ENCODE measurements at regions of chr22 and their contacts with region 1.

Region 1: DNA sequence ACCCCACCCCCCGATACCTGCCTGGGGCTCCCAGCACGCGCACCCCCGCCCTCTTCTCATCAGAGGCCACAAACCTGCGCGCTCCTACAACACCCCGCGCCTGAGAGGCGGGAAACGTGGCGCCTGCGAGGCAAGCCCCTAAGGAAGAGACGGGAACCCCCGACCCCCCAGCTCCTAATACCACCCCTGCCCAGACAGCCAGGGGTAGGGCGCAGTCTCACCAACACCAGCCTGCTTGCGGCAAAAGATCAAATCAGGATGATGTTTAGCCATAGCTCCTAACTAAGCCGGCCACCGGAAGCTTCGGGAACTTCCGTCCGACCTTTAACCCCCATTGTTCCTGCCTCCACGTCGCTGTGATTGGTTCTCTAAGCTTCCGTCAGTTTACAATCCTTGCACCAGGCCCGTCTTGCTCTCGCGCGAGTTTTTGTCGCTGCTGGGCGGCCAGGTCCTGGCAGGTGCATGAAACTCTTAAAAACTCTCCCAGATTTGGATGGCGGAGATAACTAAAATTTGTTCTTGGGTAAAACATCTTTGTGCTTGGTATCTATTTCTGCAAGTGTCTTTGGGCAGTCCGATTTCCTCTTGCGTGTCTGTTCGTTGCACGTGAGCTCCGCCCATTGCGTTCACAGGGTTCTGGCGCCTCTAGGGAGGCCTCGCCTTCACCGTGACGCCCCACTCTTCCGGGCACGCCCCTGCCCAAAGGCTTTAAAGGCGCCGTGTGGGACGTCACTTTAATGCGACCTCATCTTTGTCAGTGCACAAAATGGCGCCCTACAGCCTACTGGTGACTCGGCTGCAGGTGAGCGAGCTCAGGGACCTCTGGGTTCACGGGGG is at the starts of genes ACO2 and PHF5A:
- DNase-seq: peak; percentile 97 to 98 (median 97)
- H3K4me3 ChIP-seq: peak within 1 kb of the TSS; percentile 70 to 93 (median 93)
- H3K4me3 Mint-ChIP-seq: peak within 1 kb of the TSS; percentile 88 to 96
- H3K27ac ChIP-seq: peak within 1 kb of the TSS; percentile 94 to 99
- H3K27ac Mint-ChIP-seq: peak within 1 kb of the TSS; percentile 99 to 100 (median 99)
- H3K4me1 ChIP-seq: peaks cover 16 to 29% of the 10 kb centered on the region in 2 donors
- H3K4me1 Mint-ChIP-seq: peaks cover 27% of the 10 kb centered on the region
- H3K27me3 ChIP-seq: no peaks in the 10 kb centered on the region
- H3K27me3 Mint-ChIP-seq: no peaks in the 10 kb centered on the region
- CTCF ChIP-seq: no peak
- polyA plus RNA-seq, gene ACO2: 56.8 to 75.8 (median 64.2) TPM
- polyA plus RNA-seq, gene PHF5A: 22.0 to 31.3 (median 26.3) TPM

Region 2: GRCh38 chr22:41381329-41382097 is 87.1 kb before region 1 on chr22 and contains the start of gene TEF:
- intact Hi-C with region 1: loop called in 1 of 2 experiments (anchors 2 kb)
- DNase-seq: peak; percentile 97 to 98 (median 98)
- H3K4me3 ChIP-seq: peak within 1 kb of the TSS; percentile 54 to 85 (median 70)
- H3K4me3 Mint-ChIP-seq: peak within 1 kb of the TSS; percentile 80 to 89
- H3K27ac ChIP-seq: peak within 1 kb of the TSS; percentile 87 to 90
- H3K27ac Mint-ChIP-seq: peak within 1 kb of the TSS; percentile 92 to 99 (median 95)
- H3K4me1 ChIP-seq: peaks cover 12 to 18% of the 10 kb centered on the region in 2 donors
- H3K4me1 Mint-ChIP-seq: peaks cover 17% of the 10 kb centered on the region
- H3K27me3 ChIP-seq: no peaks in the 10 kb centered on the region
- H3K27me3 Mint-ChIP-seq: peaks cover 3 to 7% (median 3%) of the 10 kb centered on the region in 3 donors
- CTCF ChIP-seq: no peak
- polyA plus RNA-seq, gene TEF: 0.71 to 1.7 (median 1.1) TPM

Region 3: DNA sequence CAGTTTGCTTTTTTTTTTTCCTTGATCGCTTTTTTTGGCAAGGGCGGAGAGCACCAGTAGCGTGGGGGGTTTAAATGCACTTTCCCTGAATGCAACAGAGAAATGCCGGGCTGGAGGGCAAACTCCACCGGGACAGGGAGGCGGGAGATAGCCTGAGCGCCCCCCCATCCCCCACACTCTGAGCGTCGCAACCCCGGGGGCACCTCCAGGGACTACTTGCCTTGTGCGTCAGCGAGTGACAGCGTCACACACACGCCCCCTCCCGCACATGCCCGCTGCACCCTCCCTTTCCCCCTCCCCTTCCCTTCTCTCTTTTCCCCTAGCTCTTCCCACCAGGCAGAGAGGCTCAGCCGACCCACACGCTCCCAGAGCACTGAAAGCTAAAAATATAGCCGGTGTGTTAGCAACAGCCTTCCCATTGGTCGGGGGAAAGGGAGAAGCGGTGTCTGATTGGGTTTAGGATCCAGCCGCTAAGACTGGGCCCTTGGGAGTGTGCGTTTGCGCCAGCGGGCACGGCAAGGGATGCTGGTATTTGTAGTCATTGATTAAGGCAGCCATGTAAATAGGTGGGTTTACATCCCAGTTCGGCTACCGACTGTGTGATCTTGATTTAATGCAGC is 20.3 kb before region 1 on chr22:
- intact Hi-C with region 1: loop called (anchors 1 to 2 kb)
- DNase-seq: peak; percentile 96 to 97 (median 97)
- H3K4me3 ChIP-seq: peak overlapping the region; percentile 73 to 99 (median 93)
- H3K4me3 Mint-ChIP-seq: peak overlapping the region; percentile 97 to 98
- H3K27ac ChIP-seq: peak overlapping the region; percentile 89 to 99
- H3K27ac Mint-ChIP-seq: peak overlapping the region; percentile 96 to 99 (median 98)
- H3K4me1 ChIP-seq: peaks cover 19 to 32% of the 10 kb centered on the region in 2 donors
- H3K4me1 Mint-ChIP-seq: peaks cover 26% of the 10 kb centered on the region
- H3K27me3 ChIP-seq: no peaks in the 10 kb centered on the region
- H3K27me3 Mint-ChIP-seq: peaks cover 0 to 2% (median 1%) of the 10 kb centered on the region in 3 donors
- CTCF ChIP-seq: no peak

Region 4: GRCh38 chr22:41543854-41544670 is 75.5 kb after region 1 on chr22 and contains the start of gene POLR3H:
- intact Hi-C with region 1: loop called in 1 of 2 experiments (anchors 5 kb)
- DNase-seq: peak; percentile 96 to 99 (median 98)
- H3K4me3 ChIP-seq: peak within 1 kb of the TSS; percentile 56 to 93 (median 82)
- H3K4me3 Mint-ChIP-seq: peak within 1 kb of the TSS; percentile 87 to 94
- H3K27ac ChIP-seq: peak within 1 kb of the TSS; percentile 87 to 93
- H3K27ac Mint-ChIP-seq: peak within 1 kb of the TSS; percentile 83 to 95 (median 93)
- H3K4me1 ChIP-seq: peaks cover 17 to 24% of the 10 kb centered on the region in 2 donors
- H3K4me1 Mint-ChIP-seq: peaks cover 29% of the 10 kb centered on the region
- H3K27me3 ChIP-seq: no peaks in the 10 kb centered on the region
- H3K27me3 Mint-ChIP-seq: peaks cover 0 to 4% (median 2%) of the 10 kb centered on the region in 3 donors
- CTCF ChIP-seq: peak; percentile 79
- polyA plus RNA-seq, gene POLR3H: 9.4 to 19.0 (median 10.4) TPM

Region 5: DNA sequence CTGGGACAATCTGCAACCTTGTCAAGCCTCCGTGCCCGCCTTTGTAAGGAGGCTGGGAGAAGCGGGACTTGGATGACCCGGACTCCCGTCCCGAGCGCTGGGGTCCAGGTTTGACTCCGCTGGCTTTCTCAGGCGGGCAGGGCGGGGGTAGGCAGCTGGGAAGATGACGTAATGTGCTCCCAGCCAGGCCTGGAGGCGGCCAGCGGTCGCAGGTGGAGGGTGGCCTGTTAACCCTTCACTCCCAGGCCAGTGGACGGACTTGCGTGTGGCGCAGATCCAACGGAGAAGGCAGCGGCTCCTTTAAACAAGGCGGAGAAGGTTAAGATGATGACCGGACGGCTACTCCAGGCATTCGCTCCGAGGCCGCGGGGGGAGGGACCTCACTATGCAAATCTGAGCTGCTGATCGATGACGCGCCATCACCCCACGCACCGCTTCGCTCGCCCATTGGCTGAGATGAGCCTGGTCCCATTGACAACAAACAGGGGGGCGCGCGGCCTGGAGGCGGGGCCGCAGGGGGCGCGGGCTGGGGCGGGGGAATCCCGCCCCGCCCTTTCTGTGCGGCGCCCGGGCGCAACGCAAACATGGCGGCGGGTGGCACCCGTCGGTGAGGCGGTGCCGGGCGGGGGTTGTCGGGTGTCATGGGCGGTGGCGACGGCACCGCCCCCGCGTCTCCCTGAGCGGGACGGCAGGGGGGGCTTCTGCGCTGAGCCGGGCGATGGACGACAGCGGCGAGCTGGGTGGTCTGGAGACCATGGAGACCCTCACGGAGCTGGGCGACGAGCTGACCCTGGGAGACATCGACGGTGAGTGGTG is 364.2 kb after region 1 on chr22 and contains the start of gene SREBF2:
- intact Hi-C with region 1: loop called in 1 of 2 experiments (anchors 10 kb)
- DNase-seq: peak; percentile 98 to 99 (median 99)
- H3K4me3 ChIP-seq: peak within 1 kb of the TSS; percentile 63 to 87 (median 83)
- H3K4me3 Mint-ChIP-seq: peak within 1 kb of the TSS; percentile 97
- H3K27ac ChIP-seq: peak within 1 kb of the TSS; percentile 95 to 97
- H3K27ac Mint-ChIP-seq: peak within 1 kb of the TSS; percentile 98 to 100 (median 99)
- H3K4me1 ChIP-seq: peaks cover 28 to 32% of the 10 kb centered on the region in 2 donors
- H3K4me1 Mint-ChIP-seq: peaks cover 34% of the 10 kb centered on the region
- H3K27me3 ChIP-seq: no peaks in the 10 kb centered on the region
- H3K27me3 Mint-ChIP-seq: peaks cover 0 to 3% (median 2%) of the 10 kb centered on the region in 3 donors
- CTCF ChIP-seq: no peak
- polyA plus RNA-seq, gene SREBF2: 22.2 to 25.1 (median 24.5) TPM

Measured in CD14-positive monocyte (primary cell).